ENCODE measurements at regions of chr6 and their contacts with region 1.

Region 1: GRCh38 chr6:24933868-24934401 is 1.8 kb downstream of the RIPOR2 start:
- DNase-seq: peak; percentile 63 to 74 (median 68)
- H3K4me3 ChIP-seq: peak overlapping the region; percentile 96 to 100
- H3K4me3 Mint-ChIP-seq: peak overlapping the region; percentile 96 to 100 (median 99)
- H3K27ac ChIP-seq: peak overlapping the region; percentile 78
- H3K27ac Mint-ChIP-seq: peak overlapping the region; percentile 87 to 96 (median 94)
- H3K4me1 ChIP-seq: peaks cover 55% of the 10 kb centered on the region
- H3K4me1 Mint-ChIP-seq: peaks cover 39 to 68% (median 51%) of the 10 kb centered on the region in 4 donors
- H3K27me3 ChIP-seq: no peaks in the 10 kb centered on the region
- H3K27me3 Mint-ChIP-seq: no peaks in the 10 kb centered on the region

Region 2: DNA sequence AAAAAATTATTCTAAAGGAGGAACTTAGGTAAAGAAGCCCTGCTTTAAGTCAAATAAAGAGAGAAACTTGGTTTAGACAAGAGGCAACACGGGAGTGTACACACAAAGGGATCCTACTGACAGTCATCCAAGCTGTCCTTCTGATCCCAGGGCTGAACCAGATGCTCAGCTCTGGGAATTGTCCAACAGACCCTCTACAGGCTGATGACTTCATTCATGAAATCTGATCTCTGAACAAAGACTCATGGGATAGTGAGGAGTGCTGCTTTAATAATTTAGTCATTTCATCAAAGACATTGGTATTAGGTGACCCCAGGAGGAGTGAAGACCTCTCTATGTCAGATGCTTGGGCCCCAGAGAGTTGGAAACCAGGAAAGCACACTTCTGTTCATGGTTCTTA is 69.6 kb before region 1 on chr6:
- CTCF ChIA-PET with region 1: interaction called, 8 read pairs
- POLR2A ChIA-PET with region 1: interaction called, 76 read pairs
- intact Hi-C with region 1: no loop called
- DNase-seq: no peak
- H3K4me3 ChIP-seq: no peak overlapping the region
- H3K4me3 Mint-ChIP-seq: peak overlapping the region in 4 of 8 donors; percentile 18 to 63 (median 40)
- H3K27ac ChIP-seq: peak overlapping the region; percentile 14
- H3K27ac Mint-ChIP-seq: peak overlapping the region; percentile 60 to 88 (median 82)
- H3K4me1 ChIP-seq: peaks cover 95% of the 10 kb centered on the region
- H3K4me1 Mint-ChIP-seq: peaks cover 65 to 98% (median 79%) of the 10 kb centered on the region in 4 donors
- H3K27me3 ChIP-seq: no peaks in the 10 kb centered on the region
- H3K27me3 Mint-ChIP-seq: no peaks in the 10 kb centered on the region

Region 3: DNA sequence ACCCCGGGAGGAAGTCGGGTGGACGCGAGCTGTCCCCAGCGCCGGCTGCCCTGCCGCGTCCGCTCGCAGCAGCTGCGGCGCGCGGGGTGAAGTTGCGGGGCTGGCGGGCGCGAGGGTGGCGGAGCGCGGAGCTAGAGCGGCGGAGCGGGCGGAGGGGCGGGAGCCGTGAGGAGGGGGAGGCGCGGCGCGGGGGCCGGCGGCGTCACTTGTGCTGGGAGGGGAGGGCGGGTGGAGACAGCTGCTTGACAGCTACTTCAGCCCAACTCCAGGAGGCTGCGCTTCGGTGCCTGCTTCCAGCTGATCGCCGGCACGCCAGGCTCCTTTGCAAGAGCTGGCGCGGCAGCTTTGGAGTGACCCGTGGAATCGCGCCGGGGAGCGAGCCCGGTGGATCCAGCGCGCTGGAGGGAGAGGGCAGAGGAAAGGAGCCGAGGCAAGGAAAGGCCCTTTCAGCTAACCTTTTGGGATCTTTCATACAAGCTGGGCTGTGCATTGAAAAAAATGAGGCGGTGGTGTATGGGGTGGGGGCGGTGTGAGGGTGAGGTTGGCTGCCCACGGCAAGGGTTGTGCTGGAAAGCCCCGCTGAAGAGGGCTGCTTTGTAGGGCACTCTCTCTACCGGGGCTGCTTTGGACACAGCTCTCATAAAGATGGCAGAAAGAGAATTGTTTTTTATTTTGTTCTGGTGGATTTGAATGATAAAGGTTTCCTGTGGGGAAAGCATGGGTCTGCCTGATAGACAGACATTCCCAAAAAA is 22.8 kb before region 1 on chr6:
- CTCF ChIA-PET with region 1: interaction called, 245 read pairs
- POLR2A ChIA-PET with region 1: interaction called, 734 read pairs
- intact Hi-C with region 1: loop called (anchors 1 kb)
- DNase-seq: peak in 3 of 5 donors; percentile 41 to 65 (median 44)
- H3K4me3 ChIP-seq: peak overlapping the region; percentile 1 to 54
- H3K4me3 Mint-ChIP-seq: peak overlapping the region; percentile 87 to 98 (median 93)
- H3K27ac ChIP-seq: peak overlapping the region; percentile 70
- H3K27ac Mint-ChIP-seq: peak overlapping the region; percentile 87 to 99 (median 96)
- H3K4me1 ChIP-seq: peaks cover 94% of the 10 kb centered on the region
- H3K4me1 Mint-ChIP-seq: peaks cover 83 to 99% (median 91%) of the 10 kb centered on the region in 4 donors
- H3K27me3 ChIP-seq: no peaks in the 10 kb centered on the region
- H3K27me3 Mint-ChIP-seq: no peaks in the 10 kb centered on the region

Region 4: DNA sequence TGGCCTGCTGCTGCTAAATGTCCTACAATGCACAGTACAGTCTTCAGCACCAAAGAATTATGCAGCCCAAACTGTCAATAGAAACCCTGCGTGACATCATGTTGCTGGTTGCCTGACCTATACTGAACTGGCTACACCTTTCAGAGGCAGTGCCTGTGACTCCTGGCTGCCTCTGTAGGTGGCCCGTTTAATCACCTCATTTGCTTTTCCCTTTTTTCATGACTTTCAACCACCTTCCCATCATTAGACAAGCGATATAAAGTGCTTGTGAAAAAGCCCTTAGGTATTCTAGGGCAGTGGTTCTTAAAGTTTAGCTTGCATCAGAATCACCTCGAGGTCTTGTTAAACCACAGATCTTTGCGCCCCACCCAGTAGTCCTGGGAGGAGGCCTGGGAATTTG is 34.9 kb after region 1 on chr6:
- CTCF ChIA-PET with region 1: interaction called, 51 read pairs
- POLR2A ChIA-PET with region 1: interaction called, 1,351 read pairs
- intact Hi-C with region 1: no loop called
- DNase-seq: peak in 1 of 5 donors; percentile 29
- H3K4me3 ChIP-seq: no peak overlapping the region
- H3K4me3 Mint-ChIP-seq: peak overlapping the region in 6 of 8 donors; percentile 7 to 65 (median 48)
- H3K27ac ChIP-seq: no peak overlapping the region
- H3K27ac Mint-ChIP-seq: peak overlapping the region in 6 of 7 donors; percentile 16 to 84 (median 41)
- H3K4me1 ChIP-seq: peaks cover 79% of the 10 kb centered on the region
- H3K4me1 Mint-ChIP-seq: peaks cover 63 to 96% (median 80%) of the 10 kb centered on the region in 4 donors
- H3K27me3 ChIP-seq: no peaks in the 10 kb centered on the region
- H3K27me3 Mint-ChIP-seq: no peaks in the 10 kb centered on the region

Region 5: DNA sequence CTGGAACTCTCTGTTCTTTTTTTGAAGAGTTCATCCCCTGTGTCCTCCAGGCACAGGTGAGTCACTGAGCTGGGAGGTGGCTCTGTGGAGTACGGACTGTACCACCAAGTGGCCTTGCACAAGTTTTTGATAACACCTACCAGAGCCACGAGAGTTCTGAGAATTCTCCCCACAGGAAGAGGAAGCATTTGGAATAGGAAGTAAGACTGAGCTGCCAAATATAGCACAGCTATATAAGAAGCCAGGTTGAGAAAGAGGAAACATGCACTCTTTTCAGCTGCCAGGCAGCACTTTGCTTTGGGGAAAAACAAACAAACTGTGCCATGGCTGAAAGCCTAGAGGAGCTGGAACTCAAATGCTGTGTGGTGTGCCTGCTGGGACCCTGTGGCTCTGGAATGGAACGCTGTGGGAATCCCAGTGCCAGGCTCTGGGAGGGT is 72.6 kb after region 1 on chr6:
- CTCF ChIA-PET with region 1: interaction called, 37 read pairs
- POLR2A ChIA-PET with region 1: interaction called, 11 read pairs
- intact Hi-C with region 1: no loop called
- DNase-seq: peak in 4 of 5 donors; percentile 30 to 74 (median 42)
- H3K4me3 ChIP-seq: peak overlapping the region in 1 of 2 donors; percentile 15
- H3K4me3 Mint-ChIP-seq: peak overlapping the region; percentile 61 to 82 (median 75)
- H3K27ac ChIP-seq: peak overlapping the region; percentile 58
- H3K27ac Mint-ChIP-seq: peak overlapping the region; percentile 68 to 94 (median 90)
- H3K4me1 ChIP-seq: peaks cover 73% of the 10 kb centered on the region
- H3K4me1 Mint-ChIP-seq: peaks cover 59 to 90% (median 70%) of the 10 kb centered on the region in 4 donors
- H3K27me3 ChIP-seq: no peaks in the 10 kb centered on the region
- H3K27me3 Mint-ChIP-seq: no peaks in the 10 kb centered on the region

Region 6: DNA sequence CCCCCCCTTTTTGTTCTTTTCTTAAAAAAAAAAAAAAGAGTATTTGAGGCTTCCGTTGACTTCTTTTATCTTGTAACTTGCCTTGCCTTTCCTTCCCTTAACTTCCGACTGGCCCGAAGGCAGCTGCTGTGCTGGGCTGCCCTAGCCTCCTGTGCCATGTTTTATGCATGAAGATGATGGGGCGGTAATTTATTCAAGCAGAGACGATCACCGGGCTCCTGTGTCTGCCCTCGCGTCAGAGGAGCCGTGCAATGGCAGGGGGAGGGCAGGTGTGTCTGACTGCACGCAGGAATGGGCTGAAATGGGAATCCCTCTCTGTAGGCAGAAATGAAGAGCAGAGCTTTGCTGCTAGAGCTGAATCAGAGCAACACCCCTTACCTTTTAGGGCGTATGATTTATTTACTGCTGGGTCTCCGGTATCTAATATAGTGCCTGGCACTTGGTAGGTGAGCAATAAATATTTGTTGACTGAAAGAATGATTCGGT is 108.1 kb after region 1 on chr6:
- CTCF ChIA-PET with region 1: interaction called, 10 read pairs
- POLR2A ChIA-PET with region 1: interaction called, 57 read pairs
- intact Hi-C with region 1: no loop called
- DNase-seq: peak; percentile 59 to 86 (median 65)
- H3K4me3 ChIP-seq: peak overlapping the region; percentile 67 to 82
- H3K4me3 Mint-ChIP-seq: peak overlapping the region; percentile 95 to 99 (median 96)
- H3K27ac ChIP-seq: peak overlapping the region; percentile 93
- H3K27ac Mint-ChIP-seq: peak overlapping the region; percentile 94 to 100 (median 98)
- H3K4me1 ChIP-seq: peaks cover 63% of the 10 kb centered on the region
- H3K4me1 Mint-ChIP-seq: peaks cover 50 to 85% (median 63%) of the 10 kb centered on the region in 4 donors
- H3K27me3 ChIP-seq: no peaks in the 10 kb centered on the region
- H3K27me3 Mint-ChIP-seq: no peaks in the 10 kb centered on the region

Measured in CD4-positive, alpha-beta memory T cell (primary cell).